Naive thymus-derived CD4-positive, alpha-beta T cell (primary cell): ENCODE measurements at regions of chr7 and their contacts with region 1.

Region 1: GRCh38 chr7:24819916-24820689 is 62.8 kb upstream of the GSDME start:
- DNase-seq: peak; percentile 33 to 72 (median 68)
- ATAC-seq: peak; percentile 58
- H3K4me3 ChIP-seq: peak overlapping the region; percentile 24
- H3K4me3 Mint-ChIP-seq: peak overlapping the region; percentile 70 to 93 (median 83)
- H3K27ac ChIP-seq: peak overlapping the region; percentile 70
- H3K27ac Mint-ChIP-seq: peak overlapping the region; percentile 91 to 99 (median 94)
- H3K4me1 ChIP-seq: peaks cover 27 to 28% of the 10 kb centered on the region in 2 donors
- H3K4me1 Mint-ChIP-seq: peaks cover 13 to 47% (median 45%) of the 10 kb centered on the region in 7 donors
- H3K27me3 ChIP-seq: no peaks in the 10 kb centered on the region
- H3K27me3 Mint-ChIP-seq: no peaks in the 10 kb centered on the region

Region 2: DNA sequence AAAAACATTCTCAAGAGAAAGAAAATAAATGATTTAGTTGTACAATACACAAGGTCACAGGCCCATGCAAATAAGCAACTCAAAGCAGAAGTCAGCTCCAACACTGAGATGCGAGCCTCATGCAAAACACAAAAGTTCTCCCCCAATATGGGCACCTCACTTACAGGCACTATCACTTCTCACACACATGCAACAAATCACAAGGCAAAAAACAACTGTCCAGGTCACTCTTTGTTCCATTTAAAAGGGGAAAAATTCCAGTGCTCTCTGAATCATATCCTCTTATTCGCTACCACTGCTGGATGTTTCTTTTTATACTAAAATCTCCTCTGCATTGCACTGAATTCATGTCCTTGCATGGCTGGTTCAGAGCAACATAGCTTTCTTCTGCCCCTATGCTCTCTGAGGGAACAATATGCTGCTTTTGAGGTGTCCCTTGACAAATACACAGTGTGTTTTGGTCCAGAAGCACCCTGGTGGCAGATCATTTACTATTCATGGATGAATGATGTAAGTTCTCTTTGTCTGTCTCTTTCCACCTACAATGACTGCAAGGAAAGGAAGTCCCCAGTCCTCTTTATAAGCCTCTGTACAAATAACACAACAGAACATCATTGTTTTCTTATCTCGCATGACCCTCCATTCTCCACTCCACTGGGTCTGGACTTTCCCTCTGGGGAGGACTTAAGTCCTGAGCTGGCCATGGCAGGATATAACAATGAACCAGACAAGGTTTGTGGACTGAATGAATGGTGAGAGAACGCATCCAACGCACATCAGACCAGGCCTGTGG is 22.5 kb after region 1 on chr7:
- CTCF ChIA-PET with region 1: no interaction called
- POLR2A ChIA-PET with region 1: no interaction called
- intact Hi-C with region 1: loop called (anchors 1 to 2 kb)
- DNase-seq: no peak
- ATAC-seq: peak; percentile 16
- H3K4me3 ChIP-seq: no peak overlapping the region
- H3K4me3 Mint-ChIP-seq: no peak overlapping the region
- H3K27ac ChIP-seq: no peak overlapping the region
- H3K27ac Mint-ChIP-seq: peak overlapping the region in 2 of 9 donors; percentile 2 to 56
- H3K4me1 ChIP-seq: no peaks in the 10 kb centered on the region
- H3K4me1 Mint-ChIP-seq: peaks cover 2 to 19% (median 4%) of the 10 kb centered on the region in 7 donors
- H3K27me3 ChIP-seq: no peaks in the 10 kb centered on the region
- H3K27me3 Mint-ChIP-seq: no peaks in the 10 kb centered on the region

Region 3: DNA sequence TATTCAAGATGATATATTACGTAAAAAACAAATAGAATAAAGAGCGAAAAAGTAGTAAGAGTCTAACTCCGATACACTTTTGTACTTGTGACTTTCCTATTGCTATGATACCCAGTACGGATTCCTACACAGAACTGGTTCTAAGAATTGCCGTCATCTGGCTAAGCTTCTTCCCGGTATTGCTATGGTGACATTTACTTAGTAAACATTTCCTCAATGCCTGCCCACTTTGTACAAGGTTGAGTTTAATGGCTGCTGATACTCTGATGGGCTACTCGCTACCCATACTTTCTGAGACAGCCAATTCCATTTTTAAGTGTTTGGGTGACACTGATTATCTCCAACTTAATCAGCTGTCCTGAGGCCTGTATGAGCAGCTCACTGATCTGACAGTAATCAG is 104.3 kb after region 1 on chr7:
- CTCF ChIA-PET with region 1: no interaction called
- POLR2A ChIA-PET with region 1: no interaction called
- intact Hi-C with region 1: loop called in 1 of 2 experiments (anchors 1 kb)
- DNase-seq: peak in 1 of 9 donors; percentile 10
- ATAC-seq: peak; percentile 54
- H3K4me3 ChIP-seq: no peak overlapping the region
- H3K4me3 Mint-ChIP-seq: peak overlapping the region in 1 of 10 donors; percentile 73
- H3K27ac ChIP-seq: no peak overlapping the region
- H3K27ac Mint-ChIP-seq: peak overlapping the region in 1 of 9 donors; percentile 91
- H3K4me1 ChIP-seq: peaks cover 0 to 16% of the 10 kb centered on the region in 2 donors
- H3K4me1 Mint-ChIP-seq: peaks cover 23 to 89% (median 37%) of the 10 kb centered on the region in 7 donors
- H3K27me3 ChIP-seq: no peaks in the 10 kb centered on the region
- H3K27me3 Mint-ChIP-seq: no peaks in the 10 kb centered on the region

Region 4: DNA sequence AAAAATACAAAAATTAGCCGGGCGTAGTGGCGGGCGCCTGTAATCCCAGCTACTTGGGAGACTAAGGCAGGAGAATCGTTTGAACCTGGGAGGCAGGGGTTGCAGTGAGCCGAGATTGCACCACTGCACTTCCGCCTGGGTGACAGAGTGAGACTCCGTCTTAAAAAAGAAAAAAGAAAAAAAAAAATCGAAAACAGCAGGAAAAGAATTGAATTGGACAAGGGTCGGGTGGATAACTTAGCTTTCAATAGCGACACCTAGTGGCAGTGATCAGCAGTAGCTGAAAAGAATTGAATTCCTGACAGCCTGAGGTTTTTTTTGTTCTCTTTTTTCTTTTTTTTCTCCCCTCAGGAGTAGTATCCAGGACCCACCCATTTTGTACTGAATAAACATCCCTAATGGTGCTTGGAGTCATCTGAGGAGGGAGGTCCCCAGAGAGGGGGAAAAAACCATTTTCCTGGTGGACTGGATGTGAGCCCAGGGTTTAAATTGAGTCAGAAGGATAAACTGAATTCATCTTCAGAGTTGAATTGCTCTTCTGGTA is 249.9 kb after region 1 on chr7:
- CTCF ChIA-PET with region 1: interaction called, 56 read pairs
- POLR2A ChIA-PET with region 1: interaction called, 10 read pairs
- intact Hi-C with region 1: loop called (anchors 1 kb)
- DNase-seq: peak in 8 of 9 donors; percentile 27 to 63 (median 54)
- ATAC-seq: peak; percentile 74
- H3K4me3 ChIP-seq: no peak overlapping the region
- H3K4me3 Mint-ChIP-seq: no peak overlapping the region
- H3K27ac ChIP-seq: no peak overlapping the region
- H3K27ac Mint-ChIP-seq: no peak overlapping the region
- H3K4me1 ChIP-seq: no peaks in the 10 kb centered on the region
- H3K4me1 Mint-ChIP-seq: peaks cover 0 to 17% (median 0%) of the 10 kb centered on the region in 7 donors
- H3K27me3 ChIP-seq: no peaks in the 10 kb centered on the region
- H3K27me3 Mint-ChIP-seq: no peaks in the 10 kb centered on the region

Region 5: GRCh38 chr7:25125137-25125946 is 305.2 kb after region 1 on chr7 and contains the start of gene CYCS:
- CTCF ChIA-PET with region 1: no interaction called
- POLR2A ChIA-PET with region 1: interaction called, 5 read pairs
- intact Hi-C with region 1: loop called (anchors 1 to 2 kb)
- DNase-seq: peak; percentile 97 to 100 (median 99)
- ATAC-seq: peak; percentile 96
- H3K4me3 ChIP-seq: peak within 1 kb of the TSS; percentile 74
- H3K4me3 Mint-ChIP-seq: peak within 1 kb of the TSS; percentile 88 to 100 (median 100)
- H3K27ac ChIP-seq: peak within 1 kb of the TSS; percentile 93
- H3K27ac Mint-ChIP-seq: peak within 1 kb of the TSS; percentile 98 to 100 (median 100)
- H3K4me1 ChIP-seq: peaks cover 7 to 13% of the 10 kb centered on the region in 2 donors
- H3K4me1 Mint-ChIP-seq: peaks cover 15 to 40% (median 23%) of the 10 kb centered on the region in 7 donors
- H3K27me3 ChIP-seq: no peaks in the 10 kb centered on the region
- H3K27me3 Mint-ChIP-seq: peaks cover 0 to 5% (median 0%) of the 10 kb centered on the region in 5 donors
- total RNA-seq, gene CYCS: 40.4 to 130 (median 114) TPM